Caco-2 (cell line): ENCODE measurements at regions of chr2 and their contacts with region 1.

Region 1: DNA sequence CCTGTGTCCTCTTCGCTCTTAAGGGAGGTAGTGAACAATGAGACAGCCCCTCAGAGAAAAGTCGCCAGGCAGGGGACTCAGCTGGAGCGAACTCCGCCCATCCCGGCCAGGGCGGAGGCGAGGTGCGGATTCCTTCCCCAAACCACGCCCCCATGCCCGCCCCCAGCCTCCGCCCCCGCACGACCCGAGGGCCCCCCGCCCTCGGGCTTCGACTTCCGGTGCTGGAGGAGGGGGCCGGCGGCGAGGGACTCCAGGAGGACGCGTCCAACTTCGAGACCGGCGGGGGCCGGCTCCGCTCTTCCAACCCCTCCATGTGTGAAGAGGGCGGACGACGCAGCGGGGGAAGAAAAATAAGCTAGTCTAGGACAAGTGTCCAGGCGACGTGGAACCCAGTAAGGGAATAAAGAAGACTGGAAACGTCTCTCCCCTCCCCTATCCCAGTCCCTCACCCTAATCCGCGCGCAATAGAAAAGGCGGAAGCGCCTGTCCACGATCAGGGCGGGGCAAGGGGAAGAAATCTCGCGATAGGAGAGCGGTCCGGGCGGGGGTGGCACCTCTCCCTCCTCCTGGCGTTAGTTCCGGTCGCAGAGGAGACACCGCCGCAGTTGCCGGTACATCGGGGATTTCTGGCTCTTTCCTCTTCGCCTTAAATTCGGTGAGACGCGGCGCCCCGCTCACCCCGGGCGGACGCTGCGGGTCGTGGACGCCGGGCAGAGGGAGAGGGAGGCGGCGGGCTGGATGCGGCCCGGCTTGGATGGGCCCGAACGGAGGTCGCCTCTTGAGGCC is at the start of gene BZW1:
- DNase-seq: peak; percentile 97 to 98
- H3K4me3 ChIP-seq: peak within 1 kb of the TSS; percentile 99
- H3K4me3 Mint-ChIP-seq: peak within 1 kb of the TSS; percentile 89
- H3K27ac Mint-ChIP-seq: peak within 1 kb of the TSS; percentile 98
- H3K4me1 ChIP-seq: peaks cover 22% of the 10 kb centered on the region
- H3K4me1 Mint-ChIP-seq: peaks cover 16% of the 10 kb centered on the region
- H3K27me3 ChIP-seq: no peaks in the 10 kb centered on the region
- H3K27me3 Mint-ChIP-seq: no peaks in the 10 kb centered on the region
- CTCF ChIP-seq: no peak
- total RNA-seq, gene BZW1: 322 and 325 TPM in 2 replicates

Region 2: GRCh38 chr2:200578778-200579177 is 232.8 kb before region 1 on chr2:
- CTCF ChIA-PET with region 1: no interaction called
- POLR2A ChIA-PET with region 1: no interaction called
- intact Hi-C with region 1: loop called (anchors 10 kb)
- DNase-seq: peak in 1 of 2 experiments; percentile 65
- H3K4me3 ChIP-seq: no peak overlapping the region
- H3K4me3 Mint-ChIP-seq: no peak overlapping the region
- H3K27ac Mint-ChIP-seq: no peak overlapping the region
- H3K4me1 ChIP-seq: peaks cover 6% of the 10 kb centered on the region; the same call in 1 of the 2 replicates
- H3K4me1 Mint-ChIP-seq: peaks cover 7% of the 10 kb centered on the region
- H3K27me3 ChIP-seq: no peaks in the 10 kb centered on the region
- H3K27me3 Mint-ChIP-seq: no peaks in the 10 kb centered on the region
- CTCF ChIP-seq: peak; percentile 68 to 76

Region 3: GRCh38 chr2:200742426-200742825 is 69.1 kb before region 1 on chr2:
- CTCF ChIA-PET with region 1: interaction called, 3 read pairs
- POLR2A ChIA-PET with region 1: interaction called, 7 read pairs
- intact Hi-C with region 1: loop called (anchors 1 kb)
- DNase-seq: no peak
- H3K4me3 ChIP-seq: no peak overlapping the region
- H3K4me3 Mint-ChIP-seq: no peak overlapping the region
- H3K27ac Mint-ChIP-seq: peak overlapping the region; percentile 98
- H3K4me1 ChIP-seq: peaks cover 45% of the 10 kb centered on the region
- H3K4me1 Mint-ChIP-seq: peaks cover 43% of the 10 kb centered on the region
- H3K27me3 ChIP-seq: no peaks in the 10 kb centered on the region
- H3K27me3 Mint-ChIP-seq: no peaks in the 10 kb centered on the region
- CTCF ChIP-seq: no peak

Region 4: DNA sequence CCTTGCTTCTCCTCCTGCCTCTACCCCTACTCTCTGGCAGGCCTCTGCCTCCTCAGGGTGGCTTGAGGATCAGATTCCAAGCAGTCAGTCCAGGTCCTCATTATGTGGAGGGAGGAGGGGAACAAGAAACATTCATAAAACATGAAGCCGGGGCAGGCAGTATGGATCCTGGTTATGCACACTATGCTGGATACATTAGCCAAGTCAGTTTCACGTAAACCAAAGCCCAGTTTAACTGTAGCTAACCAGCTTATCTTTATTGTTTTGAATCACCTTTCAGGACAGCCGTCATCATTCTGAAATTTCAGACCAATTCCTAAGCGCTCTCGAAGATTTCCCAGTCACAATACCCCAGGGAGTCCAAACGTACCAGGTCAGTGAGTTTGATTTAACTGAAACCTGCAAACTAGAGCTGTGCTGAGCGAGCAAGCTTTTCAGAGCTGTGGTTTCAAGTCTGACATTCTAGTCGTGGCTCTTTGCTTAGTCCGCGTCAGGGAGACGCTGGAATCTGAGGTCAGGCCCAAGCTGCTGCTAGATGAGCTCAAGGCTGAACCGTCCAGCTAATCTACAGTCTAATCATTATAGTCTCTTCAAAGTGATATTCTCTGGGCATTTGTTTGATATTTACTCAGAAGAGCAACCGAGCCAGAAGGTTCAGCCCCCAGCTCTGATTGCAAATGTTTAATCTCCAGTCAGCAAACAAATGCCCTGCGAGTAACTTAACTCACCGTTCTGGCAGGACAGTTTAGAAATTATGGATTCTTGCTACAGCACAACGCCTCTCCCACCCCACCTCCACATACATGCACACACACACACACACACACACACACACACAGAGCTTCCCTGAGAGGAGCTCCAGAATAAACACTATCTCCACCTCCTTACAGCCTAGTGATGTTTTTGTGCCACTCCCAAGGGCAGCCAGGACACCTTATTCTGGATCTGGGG is 63.6 kb before region 1 on chr2:
- CTCF ChIA-PET with region 1: interaction called, 3 read pairs
- POLR2A ChIA-PET with region 1: interaction called, 7 read pairs
- intact Hi-C with region 1: loop called (anchors 1 kb)
- DNase-seq: peak; percentile 77 to 87
- H3K4me3 ChIP-seq: no peak overlapping the region
- H3K4me3 Mint-ChIP-seq: peak overlapping the region; percentile 63
- H3K27ac Mint-ChIP-seq: peak overlapping the region; percentile 90
- H3K4me1 ChIP-seq: peaks cover 50% of the 10 kb centered on the region
- H3K4me1 Mint-ChIP-seq: peaks cover 32% of the 10 kb centered on the region
- H3K27me3 ChIP-seq: no peaks in the 10 kb centered on the region
- H3K27me3 Mint-ChIP-seq: no peaks in the 10 kb centered on the region
- CTCF ChIP-seq: no peak

Region 5: GRCh38 chr2:200756618-200757321 is 54.8 kb before region 1 on chr2:
- CTCF ChIA-PET with region 1: no interaction called
- POLR2A ChIA-PET with region 1: no interaction called
- intact Hi-C with region 1: loop called (anchors 1 kb)
- DNase-seq: peak; percentile 85 to 90
- H3K4me3 ChIP-seq: no peak overlapping the region
- H3K4me3 Mint-ChIP-seq: peak overlapping the region; percentile 65
- H3K27ac Mint-ChIP-seq: peak overlapping the region; percentile 80
- H3K4me1 ChIP-seq: peaks cover 51% of the 10 kb centered on the region
- H3K4me1 Mint-ChIP-seq: peaks cover 54% of the 10 kb centered on the region
- H3K27me3 ChIP-seq: no peaks in the 10 kb centered on the region
- H3K27me3 Mint-ChIP-seq: no peaks in the 10 kb centered on the region
- CTCF ChIP-seq: no peak

Region 6: GRCh38 chr2:200864176-200864976 is 52.8 kb after region 1 on chr2 and contains the start of gene CLK1:
- CTCF ChIA-PET with region 1: no interaction called
- POLR2A ChIA-PET with region 1: no interaction called
- intact Hi-C with region 1: loop called (anchors 2 kb)
- DNase-seq: peak; percentile 94
- H3K4me3 ChIP-seq: peak within 1 kb of the TSS; percentile 96
- H3K4me3 Mint-ChIP-seq: peak within 1 kb of the TSS; percentile 84
- H3K27ac Mint-ChIP-seq: peak within 1 kb of the TSS; percentile 96
- H3K4me1 ChIP-seq: peaks cover 14% of the 10 kb centered on the region
- H3K4me1 Mint-ChIP-seq: peaks cover 25% of the 10 kb centered on the region
- H3K27me3 ChIP-seq: no peaks in the 10 kb centered on the region
- H3K27me3 Mint-ChIP-seq: no peaks in the 10 kb centered on the region
- CTCF ChIP-seq: no peak
- total RNA-seq, gene CLK1: 62.6 and 68.0 TPM in 2 replicates

Region 7: GRCh38 chr2:200888704-200889625 is 77.4 kb after region 1 on chr2 and contains the starts of genes NIF3L1 and PPIL3:
- CTCF ChIA-PET with region 1: no interaction called
- POLR2A ChIA-PET with region 1: no interaction called
- intact Hi-C with region 1: loop called (anchors 1 kb)
- DNase-seq: peak; percentile 98 to 99
- H3K4me3 ChIP-seq: peak within 1 kb of the TSS; percentile 56
- H3K4me3 Mint-ChIP-seq: peak within 1 kb of the TSS; percentile 89
- H3K27ac Mint-ChIP-seq: peak within 1 kb of the TSS; percentile 97
- H3K4me1 ChIP-seq: 0 out of 2 replicates have a peak, but pooled peaks cover 3% of the 10 kb centered on the region
- H3K4me1 Mint-ChIP-seq: peaks cover 19% of the 10 kb centered on the region
- H3K27me3 ChIP-seq: no peaks in the 10 kb centered on the region
- H3K27me3 Mint-ChIP-seq: no peaks in the 10 kb centered on the region
- CTCF ChIP-seq: no peak
- total RNA-seq, gene NIF3L1: 40.7 and 49.7 TPM in 2 replicates
- total RNA-seq, gene PPIL3: 17.6 and 25.0 TPM in 2 replicates